ENCODE measurements at regions of chr10 and their contacts with region 1.

Region 1: DNA sequence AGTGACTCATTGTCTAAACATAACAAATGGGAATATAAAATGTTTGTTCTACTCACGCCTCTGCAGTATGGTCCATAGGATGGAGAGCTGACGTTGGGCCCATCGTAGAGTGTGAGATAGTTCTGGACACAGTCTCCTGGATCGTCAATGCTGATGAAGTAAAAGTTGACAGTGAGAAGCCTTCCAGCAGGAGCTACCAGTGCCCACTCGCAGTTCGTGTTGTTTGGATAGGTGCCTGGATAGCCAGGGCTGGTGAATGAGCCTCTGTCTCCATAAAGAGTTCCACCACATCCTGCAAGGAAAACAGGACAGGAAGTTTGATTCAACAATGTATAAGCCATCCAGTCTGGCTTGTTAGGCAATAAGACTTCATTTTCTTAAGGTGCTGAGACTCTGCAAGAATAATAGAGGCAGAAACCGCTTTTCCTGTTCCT is 79.6 kb downstream of the OR13A1 start:
- DNase-seq: peak; percentile 7
- ATAC-seq: peak; percentile 24
- H3K4me3 ChIP-seq: no peak overlapping the region
- H3K27ac ChIP-seq: no peak overlapping the region
- H3K4me1 ChIP-seq: no peaks in the 10 kb centered on the region
- H3K27me3 ChIP-seq: no peaks in the 10 kb centered on the region
- CTCF ChIP-seq: no peak
- POLR2A ChIP-seq: no peak
- RAD21 ChIP-seq: no peak

Region 2: GRCh38 chr10:44733501-44734488 is 502.0 kb before region 1 on chr10:
- CTCF ChIA-PET with region 1: no interaction called
- POLR2A ChIA-PET with region 1: no interaction called
- dilution Hi-C with region 1: no loop called
- in situ Hi-C with region 1: no loop called
- intact Hi-C with region 1: no loop called
- DNase-seq: no peak
- ATAC-seq: no peak
- H3K4me3 ChIP-seq: no peak overlapping the region
- H3K27ac ChIP-seq: no peak overlapping the region
- H3K4me1 ChIP-seq: no peaks in the 10 kb centered on the region
- H3K27me3 ChIP-seq: no peaks in the 10 kb centered on the region
- CTCF ChIP-seq: peak; percentile 40
- POLR2A ChIP-seq: no peak
- RAD21 ChIP-seq: peak; percentile 37; the same call in 1 of the 2 replicates

Region 3: DNA sequence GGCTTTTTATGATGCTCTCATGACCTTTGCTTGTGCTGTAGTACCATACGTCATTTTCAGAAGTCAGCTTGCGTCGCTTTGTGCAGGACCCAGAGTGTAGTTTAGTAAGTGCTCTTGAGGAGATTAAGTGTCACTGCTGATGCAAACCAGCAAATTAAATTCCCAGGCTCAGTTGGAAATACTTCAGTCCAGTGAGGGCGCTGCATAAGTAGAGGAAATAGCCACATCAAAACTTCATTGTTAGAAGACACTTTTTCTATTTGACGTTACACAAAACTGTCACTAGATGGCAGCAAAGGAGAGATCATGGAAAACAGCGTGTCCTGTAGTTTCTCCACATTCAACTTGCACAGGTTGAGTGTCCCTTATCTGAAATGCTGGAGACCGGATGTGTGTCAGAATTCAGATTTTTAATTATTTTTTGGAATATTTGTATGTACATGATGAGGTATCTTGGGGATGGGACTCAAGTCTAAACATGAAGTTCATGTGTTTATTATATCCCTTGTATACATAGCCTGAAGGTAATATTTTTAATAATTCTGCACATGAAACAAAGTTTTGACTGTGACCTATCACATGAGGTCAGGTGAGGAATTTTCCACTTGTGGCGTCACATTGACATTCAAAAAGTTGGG is 227.2 kb before region 1 on chr10:
- CTCF ChIA-PET with region 1: no interaction called
- POLR2A ChIA-PET with region 1: no interaction called
- dilution Hi-C with region 1: no loop called
- in situ Hi-C with region 1: no loop called
- intact Hi-C with region 1: loop called (anchors 2 kb)
- DNase-seq: peak; percentile 89
- ATAC-seq: peak; percentile 97
- H3K4me3 ChIP-seq: no peak overlapping the region
- H3K27ac ChIP-seq: no peak overlapping the region
- H3K4me1 ChIP-seq: peaks cover 2% of the 10 kb centered on the region; the same call in 1 of the 2 replicates
- H3K27me3 ChIP-seq: no peaks in the 10 kb centered on the region
- CTCF ChIP-seq: peak; percentile 92
- POLR2A ChIP-seq: no peak
- RAD21 ChIP-seq: peak; percentile 87

Region 4: DNA sequence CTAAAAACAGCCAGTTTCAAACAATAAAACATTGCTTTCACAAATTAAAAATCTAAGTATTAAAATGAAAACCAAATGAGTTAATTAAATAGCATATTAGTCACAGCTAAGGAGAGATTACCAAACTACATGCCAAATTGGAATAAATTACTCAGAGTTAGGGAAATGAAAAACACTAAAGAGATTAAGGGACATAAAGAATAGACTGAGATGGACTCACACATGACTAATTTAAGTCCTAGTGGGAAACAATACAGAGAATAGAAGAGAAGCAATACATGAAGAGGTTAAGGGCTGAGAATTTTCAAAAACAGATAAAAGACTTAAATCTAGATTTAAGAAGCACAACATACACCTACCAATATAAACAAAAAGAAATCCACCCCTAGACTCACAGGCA is 326.1 kb after region 1 on chr10:
- CTCF ChIA-PET with region 1: no interaction called
- POLR2A ChIA-PET with region 1: no interaction called
- dilution Hi-C with region 1: no loop called
- in situ Hi-C with region 1: no loop called
- intact Hi-C with region 1: no loop called
- DNase-seq: no peak
- ATAC-seq: no peak
- H3K4me3 ChIP-seq: no peak overlapping the region
- H3K27ac ChIP-seq: no peak overlapping the region
- H3K4me1 ChIP-seq: peaks cover 3% of the 10 kb centered on the region
- H3K27me3 ChIP-seq: no peaks in the 10 kb centered on the region
- CTCF ChIP-seq: no peak
- POLR2A ChIP-seq: no peak
- RAD21 ChIP-seq: no peak

Region 5: DNA sequence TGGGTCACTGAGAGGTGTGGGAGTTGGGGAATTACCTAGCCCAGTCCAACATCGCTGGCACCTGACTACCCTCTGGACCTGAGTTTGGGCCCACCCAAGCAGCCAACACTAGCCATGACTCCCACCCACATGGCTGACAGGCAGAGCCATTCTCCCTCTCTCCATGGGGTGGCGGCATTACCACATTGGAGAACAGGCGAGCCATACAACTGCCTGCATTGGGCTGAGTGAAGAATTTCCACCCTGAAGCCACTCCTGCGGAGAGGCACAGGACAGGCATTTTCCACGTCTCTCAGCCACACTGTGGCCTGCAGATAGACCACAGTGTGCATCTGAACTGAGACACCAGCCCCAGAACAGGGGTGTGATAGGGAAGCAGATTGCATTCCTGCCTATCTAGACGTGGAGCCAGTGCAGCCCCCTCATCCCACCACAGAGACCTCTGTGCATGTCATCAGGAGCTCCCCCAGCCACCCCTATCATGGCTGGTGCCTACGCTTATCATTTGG is 992.8 kb after region 1 on chr10:
- CTCF ChIA-PET with region 1: no interaction called
- POLR2A ChIA-PET with region 1: no interaction called
- dilution Hi-C with region 1: no loop called
- in situ Hi-C with region 1: no loop called
- intact Hi-C with region 1: loop called (anchors 10 kb)
- DNase-seq: peak; percentile 70
- ATAC-seq: peak; percentile 99
- H3K4me3 ChIP-seq: no peak overlapping the region
- H3K27ac ChIP-seq: no peak overlapping the region
- H3K4me1 ChIP-seq: peaks cover 2% of the 10 kb centered on the region; the same call in 1 of the 2 replicates
- H3K27me3 ChIP-seq: peaks cover 7% of the 10 kb centered on the region
- CTCF ChIP-seq: peak; percentile 97
- POLR2A ChIP-seq: 0 out of 2 replicates have a peak, but pooled peaks have one; percentile 39
- RAD21 ChIP-seq: peak; percentile 100